GM23248 (cell line): ENCODE measurements at regions of chrX and their contacts with region 1.

Region 1: GRCh38 chrX:101407748-101408531 is at the starts of genes GLA and HNRNPH2:
- DNase-seq: peak; percentile 96
- H3K4me3 ChIP-seq: peak within 1 kb of the TSS; percentile 93
- H3K27ac ChIP-seq: peak within 1 kb of the TSS; percentile 98
- H3K4me1 ChIP-seq: 0 out of 2 replicates have a peak, but pooled peaks cover 21% of the 10 kb centered on the region
- H3K27me3 ChIP-seq: no peaks in the 10 kb centered on the region
- total RNA-seq, gene GLA: 27.1 and 36.6 TPM in 2 replicates
- total RNA-seq, gene HNRNPH2: 53.1 and 59.0 TPM in 2 replicates

Region 2: DNA sequence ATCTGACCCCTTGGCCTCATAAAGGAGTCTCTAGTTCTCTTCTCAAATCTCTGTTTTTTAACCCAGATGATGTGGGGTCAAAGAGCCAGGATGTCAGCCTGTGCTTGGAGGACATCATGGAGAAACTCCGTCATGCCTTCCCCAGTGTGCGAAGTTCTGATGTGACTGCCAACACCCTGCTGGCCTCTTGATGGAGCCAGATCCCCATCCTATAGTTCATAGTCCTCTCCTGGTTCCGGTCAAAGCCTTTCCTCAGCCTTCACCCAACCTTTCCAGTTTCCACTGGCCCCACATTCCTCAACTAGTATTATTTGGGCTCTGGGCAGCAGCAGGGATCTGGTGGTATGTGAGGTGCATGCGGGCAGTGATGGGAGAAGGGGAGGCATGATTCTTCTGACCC is 147.5 kb before region 1 on chrX:
- in situ Hi-C with region 1: no loop called
- DNase-seq: peak; percentile 29
- H3K4me3 ChIP-seq: no peak overlapping the region
- H3K27ac ChIP-seq: no peak overlapping the region
- H3K4me1 ChIP-seq: peaks cover 3% of the 10 kb centered on the region; the same call in 1 of the 2 replicates
- H3K27me3 ChIP-seq: no peaks in the 10 kb centered on the region

Region 3: GRCh38 chrX:101642093-101642492 is 234.2 kb after region 1 on chrX:
- in situ Hi-C with region 1: loop called (anchors 25 kb)
- DNase-seq: no peak
- H3K4me3 ChIP-seq: no peak overlapping the region
- H3K27ac ChIP-seq: no peak overlapping the region
- H3K4me1 ChIP-seq: no peaks in the 10 kb centered on the region
- H3K27me3 ChIP-seq: no peaks in the 10 kb centered on the region

Region 4: GRCh38 chrX:101823236-101823635 is 415.3 kb after region 1 on chrX:
- in situ Hi-C with region 1: no loop called
- DNase-seq: no peak
- H3K4me3 ChIP-seq: no peak overlapping the region
- H3K27ac ChIP-seq: no peak overlapping the region
- H3K4me1 ChIP-seq: no peaks in the 10 kb centered on the region
- H3K27me3 ChIP-seq: no peaks in the 10 kb centered on the region